ENCODE measurements at regions of chr11 and their contacts with region 1.

Region 1: GRCh38 chr11:23611726-23612125 is 751.5 kb upstream of the CCDC179 start:
- DNase-seq: no peak
- ATAC-seq: no peak
- H3K4me3 ChIP-seq: no peak overlapping the region
- H3K27ac ChIP-seq: no peak overlapping the region
- H3K4me1 ChIP-seq: no peaks in the 10 kb centered on the region
- H3K27me3 ChIP-seq: no peaks in the 10 kb centered on the region
- CTCF ChIP-seq: no peak
- POLR2A ChIP-seq: no peak
- RAD21 ChIP-seq: no peak

Region 2: GRCh38 chr11:24312464-24313238 is 700.9 kb after region 1 on chr11:
- CTCF ChIA-PET with region 1: no interaction called
- POLR2A ChIA-PET with region 1: no interaction called
- RAD21 ChIA-PET with region 1: no interaction called
- intact Hi-C with region 1: loop called (anchors 5 kb)
- DNase-seq: no peak
- ATAC-seq: no peak
- H3K4me3 ChIP-seq: no peak overlapping the region
- H3K27ac ChIP-seq: no peak overlapping the region
- H3K4me1 ChIP-seq: no peaks in the 10 kb centered on the region
- H3K27me3 ChIP-seq: no peaks in the 10 kb centered on the region
- CTCF ChIP-seq: no peak
- POLR2A ChIP-seq: no peak
- RAD21 ChIP-seq: no peak